ENCODE measurements at regions of chr20 and their contacts with region 1.

Region 1: GRCh38 chr20:30284281-30284905 is 973.1 kb upstream of the DEFB115 start:
- DNase-seq: no peak
- H3K4me3 Mint-ChIP-seq: peak overlapping the region; percentile 88
- H3K27ac Mint-ChIP-seq: peak overlapping the region; percentile 91
- H3K4me1 Mint-ChIP-seq: peaks cover 27% of the 10 kb centered on the region
- H3K27me3 Mint-ChIP-seq: no peaks in the 10 kb centered on the region

Region 2: DNA sequence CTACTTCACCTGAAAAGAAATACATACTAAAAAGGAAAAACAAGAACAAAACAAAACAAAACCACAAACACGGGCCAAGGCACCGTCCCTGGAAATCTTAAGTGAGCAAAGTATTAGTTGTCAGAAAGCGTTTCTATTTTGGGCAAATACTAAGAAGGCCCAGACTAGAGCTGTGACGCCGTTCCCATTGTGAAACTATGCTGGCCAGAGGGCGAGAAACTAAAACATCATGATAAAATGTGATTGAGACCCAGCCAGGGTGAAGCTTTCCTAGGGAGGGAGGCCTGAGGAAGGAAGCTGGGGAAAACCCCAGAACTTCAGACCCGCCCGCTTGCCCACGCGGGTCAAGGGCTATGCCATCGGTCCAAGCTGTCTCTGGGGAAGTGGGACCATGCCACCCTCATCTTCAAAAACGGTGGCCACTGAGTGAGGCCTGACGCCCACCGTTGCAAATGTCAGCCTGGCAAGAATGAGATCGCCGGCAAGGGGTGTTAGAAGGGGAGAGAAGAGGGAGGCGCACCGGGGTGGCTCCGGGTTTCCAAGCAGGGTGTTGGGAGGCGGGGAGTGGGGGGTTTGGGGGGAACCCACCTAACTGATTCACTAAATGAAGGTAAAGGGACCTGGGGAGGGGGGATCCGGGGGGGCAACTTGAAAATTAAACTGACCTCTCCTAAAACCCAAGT is 977.9 kb before region 1 on chr20:
- intact Hi-C with region 1: loop called (anchors 5 kb)
- DNase-seq: peak; percentile 82
- H3K4me3 Mint-ChIP-seq: peak overlapping the region; percentile 72
- H3K27ac Mint-ChIP-seq: peak overlapping the region; percentile 96
- H3K4me1 Mint-ChIP-seq: peaks cover 35% of the 10 kb centered on the region
- H3K27me3 Mint-ChIP-seq: no peaks in the 10 kb centered on the region

Region 3: GRCh38 chr20:30168025-30168799 is 116.2 kb before region 1 on chr20:
- intact Hi-C with region 1: no loop called
- DNase-seq: peak; percentile 77
- H3K4me3 Mint-ChIP-seq: peak overlapping the region; percentile 28
- H3K27ac Mint-ChIP-seq: no peak overlapping the region
- H3K4me1 Mint-ChIP-seq: peaks cover 21% of the 10 kb centered on the region
- H3K27me3 Mint-ChIP-seq: no peaks in the 10 kb centered on the region

Region 4: DNA sequence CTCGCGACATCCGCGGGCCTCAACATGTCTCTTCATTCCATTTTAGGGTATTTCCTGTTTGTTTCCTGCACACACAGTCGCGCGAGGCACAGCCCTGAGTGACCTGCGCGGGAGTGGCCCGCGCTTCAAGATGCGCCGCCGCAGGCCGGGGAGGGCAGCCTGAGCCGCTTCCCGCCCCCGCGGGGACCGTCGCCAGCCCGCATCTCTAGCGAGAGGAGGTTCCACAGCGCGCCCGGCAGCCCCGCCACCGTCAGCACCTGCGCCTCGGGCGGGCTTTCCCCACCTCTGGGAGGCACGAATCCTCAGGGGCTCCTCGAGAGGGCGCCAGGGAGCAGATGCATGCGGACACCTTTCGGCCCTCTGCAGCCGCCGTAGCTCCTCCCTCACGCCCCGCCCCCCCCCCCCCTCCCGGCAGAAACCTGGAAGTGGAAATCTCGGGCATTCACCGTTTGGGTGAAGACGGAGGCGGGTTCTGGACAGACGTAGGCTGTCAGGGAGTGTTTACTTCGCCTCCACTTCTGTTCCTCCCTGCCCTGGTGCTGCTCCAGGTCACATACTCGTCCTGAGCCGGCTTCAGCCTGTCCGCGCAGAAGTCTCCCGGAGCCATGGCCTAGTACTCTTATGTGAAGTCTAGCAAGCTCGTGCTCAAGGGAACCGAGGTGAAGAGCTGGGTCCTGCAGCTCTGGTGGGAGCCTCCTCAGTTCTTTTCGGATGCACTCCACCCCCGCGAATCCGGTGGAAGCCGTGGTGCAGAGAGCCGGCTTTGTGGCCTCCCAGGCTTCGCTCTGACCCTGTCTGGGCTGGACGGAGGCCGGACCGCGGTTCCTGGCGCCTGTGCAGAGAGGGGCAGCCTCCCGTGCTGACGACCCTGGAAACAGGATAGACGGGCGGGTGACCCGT is 92.6 kb after region 1 on chr20:
- intact Hi-C with region 1: loop called (anchors 5 kb)
- DNase-seq: peak; percentile 97
- H3K4me3 Mint-ChIP-seq: peak overlapping the region; percentile 97
- H3K27ac Mint-ChIP-seq: peak overlapping the region; percentile 96
- H3K4me1 Mint-ChIP-seq: peaks cover 24% of the 10 kb centered on the region
- H3K27me3 Mint-ChIP-seq: no peaks in the 10 kb centered on the region

Region 5: GRCh38 chr20:30419466-30419865 is 135.1 kb after region 1 on chr20:
- intact Hi-C with region 1: no loop called
- DNase-seq: no peak
- H3K4me3 Mint-ChIP-seq: no peak overlapping the region
- H3K27ac Mint-ChIP-seq: no peak overlapping the region
- H3K4me1 Mint-ChIP-seq: no peaks in the 10 kb centered on the region
- H3K27me3 Mint-ChIP-seq: no peaks in the 10 kb centered on the region